ENCODE measurements at regions of chr2 and their contacts with region 1.

Region 1: DNA sequence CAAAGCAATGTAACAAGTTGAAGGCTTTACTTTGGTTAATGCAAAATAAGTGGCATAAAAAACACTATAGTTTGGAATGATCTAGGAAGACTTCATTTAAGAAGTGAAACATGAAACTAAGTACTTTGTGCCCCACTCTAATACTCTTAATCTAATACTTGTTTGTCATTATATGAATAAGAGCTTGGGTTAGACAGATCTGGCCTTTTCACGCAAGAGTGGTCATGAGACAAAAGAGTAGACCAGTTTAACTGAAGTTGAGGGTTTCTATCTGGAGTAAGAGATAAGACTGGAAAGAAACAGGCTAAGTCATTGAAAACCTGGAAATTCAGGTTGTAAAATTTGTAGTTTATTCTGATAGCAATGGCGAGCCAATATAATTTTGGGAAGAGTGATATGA is 2.8 kb downstream of the SLC30A6 start:
- DNase-seq: no peak
- ATAC-seq: no peak
- H3K4me3 Mint-ChIP-seq: no peak overlapping the region
- H3K27ac Mint-ChIP-seq: no peak overlapping the region
- H3K4me1 Mint-ChIP-seq: peaks cover 39% of the 10 kb centered on the region
- H3K27me3 Mint-ChIP-seq: no peaks in the 10 kb centered on the region
- CTCF ChIP-seq: no peak

Region 2: GRCh38 chr2:30978001-30978400 is 1190.5 kb before region 1 on chr2:
- CTCF ChIA-PET with region 1: no interaction called
- POLR2A ChIA-PET with region 1: no interaction called
- intact Hi-C with region 1: no loop called
- DNase-seq: no peak
- ATAC-seq: no peak
- H3K4me3 Mint-ChIP-seq: no peak overlapping the region
- H3K27ac Mint-ChIP-seq: no peak overlapping the region
- H3K4me1 Mint-ChIP-seq: no peaks in the 10 kb centered on the region
- H3K27me3 Mint-ChIP-seq: no peaks in the 10 kb centered on the region
- CTCF ChIP-seq: no peak

Region 3: GRCh38 chr2:32039447-32040219 is 128.9 kb before region 1 on chr2 and contains the start of gene DPY30:
- CTCF ChIA-PET with region 1: no interaction called
- POLR2A ChIA-PET with region 1: interaction called, 14 read pairs
- intact Hi-C with region 1: loop called (anchors 1 kb)
- DNase-seq: peak; percentile 88
- ATAC-seq: peak; percentile 92
- H3K4me3 Mint-ChIP-seq: peak within 1 kb of the TSS; percentile 84
- H3K27ac Mint-ChIP-seq: peak within 1 kb of the TSS; percentile 91
- H3K4me1 Mint-ChIP-seq: peaks cover 17% of the 10 kb centered on the region
- H3K27me3 Mint-ChIP-seq: no peaks in the 10 kb centered on the region
- CTCF ChIP-seq: no peak
- total RNA-seq, gene DPY30: 36.2 and 37.6 TPM in 2 replicates

Region 4: DNA sequence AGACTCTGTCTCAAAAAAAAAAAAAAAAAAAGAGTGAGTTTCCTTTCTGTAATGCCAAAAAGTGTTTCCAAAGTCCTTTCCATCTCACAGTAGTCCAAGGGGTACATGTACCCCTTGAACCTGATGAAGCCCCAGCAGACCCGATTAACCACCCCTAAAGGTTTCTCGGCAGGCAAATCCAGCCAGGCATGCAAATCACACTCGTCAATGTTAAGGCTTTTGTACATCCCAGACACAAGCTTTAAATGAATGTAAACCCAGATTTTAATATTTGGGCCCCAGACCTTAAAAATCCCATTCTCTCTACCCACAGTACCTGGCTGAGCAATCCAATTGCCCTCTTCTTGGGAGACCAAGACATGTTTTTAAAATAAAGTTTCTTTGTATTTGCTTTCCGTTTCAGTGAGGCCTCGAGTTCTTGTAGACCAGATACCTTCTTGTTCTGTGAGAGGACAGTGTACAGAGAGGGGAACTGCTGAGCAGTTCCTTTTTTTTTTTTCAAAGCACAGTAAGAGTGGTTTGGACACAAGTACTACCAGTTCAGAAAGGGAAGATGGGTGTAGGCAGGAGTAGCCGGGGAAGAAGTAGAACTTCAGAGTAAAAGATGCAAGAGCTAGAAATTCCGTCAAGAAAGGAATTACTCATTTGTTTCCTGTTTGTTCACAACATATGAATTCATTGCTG is 96.1 kb after region 1 on chr2 and contains the start of gene NLRC4:
- CTCF ChIA-PET with region 1: no interaction called
- POLR2A ChIA-PET with region 1: interaction called, 3 read pairs
- intact Hi-C with region 1: loop called (anchors 5 kb)
- DNase-seq: no peak
- ATAC-seq: peak; percentile 95
- H3K4me3 Mint-ChIP-seq: peak within 1 kb of the TSS; percentile 80
- H3K27ac Mint-ChIP-seq: peak within 1 kb of the TSS; percentile 96
- H3K4me1 Mint-ChIP-seq: peaks cover 29% of the 10 kb centered on the region
- H3K27me3 Mint-ChIP-seq: no peaks in the 10 kb centered on the region
- CTCF ChIP-seq: no peak
- total RNA-seq, gene NLRC4: 0.91 and 0.98 TPM in 2 replicates

Region 5: DNA sequence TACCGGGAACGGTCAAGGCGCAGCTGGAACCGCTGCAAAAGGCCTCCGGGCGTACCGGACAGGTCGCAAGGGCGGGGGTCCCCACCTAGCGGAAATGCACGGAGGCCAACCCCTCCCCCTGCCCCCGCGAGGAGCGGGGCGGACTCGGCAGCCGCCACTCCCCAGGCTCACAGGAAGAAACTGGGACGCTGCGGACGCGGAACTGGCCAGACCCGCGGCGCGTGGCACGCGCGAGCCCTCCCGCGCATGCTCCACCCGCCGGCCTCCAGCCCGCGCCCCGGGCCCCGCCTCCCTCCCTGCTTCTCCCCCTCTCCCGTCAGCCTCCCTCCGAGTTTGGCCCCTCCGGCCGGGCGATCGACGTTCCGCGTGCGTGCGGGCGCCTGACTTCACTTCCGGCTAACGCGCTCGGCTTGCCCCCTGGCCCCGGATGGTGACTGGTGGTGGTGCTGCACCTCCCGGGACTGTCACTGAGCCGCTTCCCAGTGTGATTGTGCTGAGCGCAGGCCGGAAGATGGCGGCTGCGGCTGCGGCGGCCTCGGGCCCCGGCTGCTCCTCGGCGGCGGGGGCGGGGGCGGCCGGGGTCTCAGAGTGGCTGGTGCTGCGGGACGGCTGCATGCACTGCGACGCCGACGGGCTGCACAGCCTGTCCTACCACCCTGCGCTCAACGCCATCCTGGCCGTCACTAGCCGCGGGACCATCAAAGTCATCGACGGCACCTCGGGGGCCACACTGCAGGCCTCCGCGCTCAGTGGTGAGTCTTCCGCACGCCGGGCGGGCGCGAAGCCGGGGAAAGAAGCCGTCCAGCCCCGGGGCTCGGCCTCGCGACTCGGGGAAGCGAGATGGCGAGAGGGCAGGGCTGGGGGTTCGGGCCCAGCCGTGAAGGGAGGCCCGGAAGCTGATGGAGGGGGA is 188.5 kb after region 1 on chr2 and contains the start of gene BIRC6:
- CTCF ChIA-PET with region 1: no interaction called
- POLR2A ChIA-PET with region 1: interaction called, 8 read pairs
- intact Hi-C with region 1: loop called (anchors 5 kb)
- DNase-seq: peak; percentile 96
- ATAC-seq: peak; percentile 87
- H3K4me3 Mint-ChIP-seq: peak within 1 kb of the TSS; percentile 93
- H3K27ac Mint-ChIP-seq: peak within 1 kb of the TSS; percentile 90
- H3K4me1 Mint-ChIP-seq: peaks cover 41% of the 10 kb centered on the region
- H3K27me3 Mint-ChIP-seq: no peaks in the 10 kb centered on the region
- CTCF ChIP-seq: no peak
- total RNA-seq, gene BIRC6: 155 and 180 TPM in 2 replicates

Region 6: GRCh38 chr2:33599175-33599942 is 1430.8 kb after region 1 on chr2 and contains the start of gene FAM98A:
- CTCF ChIA-PET with region 1: no interaction called
- POLR2A ChIA-PET with region 1: interaction called, 4 read pairs
- intact Hi-C with region 1: loop called (anchors 5 kb)
- DNase-seq: peak; percentile 97
- ATAC-seq: peak; percentile 94
- H3K4me3 Mint-ChIP-seq: peak within 1 kb of the TSS; percentile 99
- H3K27ac Mint-ChIP-seq: peak within 1 kb of the TSS; percentile 96
- H3K4me1 Mint-ChIP-seq: peaks cover 34% of the 10 kb centered on the region
- H3K27me3 Mint-ChIP-seq: no peaks in the 10 kb centered on the region
- CTCF ChIP-seq: no peak
- total RNA-seq, gene FAM98A: 30.2 and 40.5 TPM in 2 replicates